Left ventricle myocardium superior (tissue), 1 donor: ENCODE measurements at regions of chr9 and their contacts with region 1.

Region 1: DNA sequence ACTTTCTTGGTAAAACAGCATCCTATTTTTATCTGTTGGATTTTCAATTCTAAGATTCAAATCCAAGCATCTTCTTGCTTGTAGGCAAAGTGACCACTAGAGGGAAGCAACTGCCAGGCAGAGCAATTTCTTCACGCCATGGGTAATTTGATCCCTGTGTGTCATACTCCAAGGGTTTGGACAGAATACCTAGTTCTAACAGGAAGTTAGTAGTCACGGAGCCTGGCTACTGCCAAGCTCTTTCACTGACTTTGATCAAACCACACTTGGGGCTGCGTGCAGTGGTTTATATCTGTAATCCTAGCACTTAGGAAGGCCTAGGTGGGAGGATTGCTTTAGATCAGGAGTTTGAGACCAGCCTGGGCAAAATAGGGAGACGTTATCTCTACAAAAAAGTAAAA is 473.6 kb upstream of the TNC start:
- DNase-seq: no peak
- ATAC-seq: peak; percentile 80

Region 2: DNA sequence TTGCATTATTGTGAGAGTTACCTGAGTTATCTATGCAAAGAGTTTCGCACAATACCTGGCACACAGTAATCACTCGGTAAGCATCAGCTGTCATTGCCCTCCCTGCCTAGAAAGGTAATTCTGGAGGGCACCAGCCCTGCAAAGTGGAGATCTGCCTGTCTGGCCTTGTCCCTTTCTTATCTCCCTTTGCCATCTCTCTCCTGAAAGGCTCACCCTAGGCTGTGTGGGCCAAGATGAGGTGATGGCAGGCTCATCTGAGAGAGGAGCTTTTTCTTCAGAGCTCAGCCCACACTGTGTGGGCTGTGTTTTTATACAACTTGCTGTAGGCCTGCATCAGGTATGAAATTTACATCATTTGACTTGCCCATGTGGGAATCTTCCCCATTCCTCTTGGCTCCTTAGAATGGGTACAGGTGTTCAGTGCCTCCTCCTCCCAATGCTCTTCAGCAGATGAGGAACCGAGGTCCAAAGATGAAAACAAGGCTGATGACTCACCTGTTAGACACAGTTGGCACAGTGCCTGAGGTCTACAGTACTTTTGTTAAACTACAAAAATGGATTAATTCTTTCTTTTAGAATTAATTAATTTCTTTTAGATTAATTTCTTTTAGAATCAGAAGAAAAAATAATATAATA is 582.6 kb after region 1 on chr9:
- intact Hi-C with region 1: loop called (anchors 10 kb)
- DNase-seq: no peak
- ATAC-seq: no peak

Region 3: GRCh38 chr9:116661037-116661954 is 1069.7 kb after region 1 on chr9:
- intact Hi-C with region 1: loop called (anchors 10 kb)
- DNase-seq: no peak
- ATAC-seq: peak; percentile 82

Region 4: GRCh38 chr9:116860509-116861120 is 1269.0 kb after region 1 on chr9:
- intact Hi-C with region 1: loop called (anchors 5 kb)
- DNase-seq: peak; percentile 69
- ATAC-seq: peak; percentile 81